HAP-1 (cell line): ENCODE measurements at regions of chr3 and their contacts with region 1.

Region 1: DNA sequence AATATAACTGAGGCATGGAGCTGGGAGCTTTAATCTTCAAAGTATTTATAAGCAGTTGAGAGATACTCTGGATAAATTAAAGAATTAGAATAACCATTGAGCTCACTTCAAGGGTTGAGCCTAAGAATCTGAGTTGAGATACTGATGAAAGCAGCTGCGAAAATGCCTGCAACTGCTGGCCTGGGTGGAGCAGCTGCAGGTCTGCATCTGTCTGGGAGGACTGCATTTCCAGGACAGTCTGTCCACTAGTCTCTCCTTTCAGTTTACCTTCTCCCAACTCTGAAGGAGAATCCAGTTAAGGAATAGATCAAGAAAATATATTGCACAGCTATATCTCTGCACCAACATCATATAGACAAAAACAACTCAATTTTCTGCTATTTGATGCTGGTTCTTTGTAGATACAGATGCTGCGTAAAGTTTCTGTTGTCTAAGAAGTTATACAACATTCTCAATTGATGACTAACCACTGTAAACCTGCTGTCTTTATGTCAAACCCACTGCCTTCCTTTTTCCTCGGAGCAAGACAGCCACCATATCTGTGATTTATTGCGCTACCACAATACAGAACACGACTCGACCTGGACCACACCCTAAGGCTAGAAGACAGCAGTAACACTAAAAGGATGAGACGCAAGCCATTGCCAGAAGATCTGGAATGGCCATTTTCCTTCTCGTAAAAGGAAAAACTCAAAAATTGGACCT is 245.1 kb downstream of the MAGI1 start:
- DNase-seq: no peak
- H3K4me3 ChIP-seq: no peak overlapping the region
- H3K4me1 ChIP-seq: no peaks in the 10 kb centered on the region
- H3K27me3 ChIP-seq: no peaks in the 10 kb centered on the region

Region 2: DNA sequence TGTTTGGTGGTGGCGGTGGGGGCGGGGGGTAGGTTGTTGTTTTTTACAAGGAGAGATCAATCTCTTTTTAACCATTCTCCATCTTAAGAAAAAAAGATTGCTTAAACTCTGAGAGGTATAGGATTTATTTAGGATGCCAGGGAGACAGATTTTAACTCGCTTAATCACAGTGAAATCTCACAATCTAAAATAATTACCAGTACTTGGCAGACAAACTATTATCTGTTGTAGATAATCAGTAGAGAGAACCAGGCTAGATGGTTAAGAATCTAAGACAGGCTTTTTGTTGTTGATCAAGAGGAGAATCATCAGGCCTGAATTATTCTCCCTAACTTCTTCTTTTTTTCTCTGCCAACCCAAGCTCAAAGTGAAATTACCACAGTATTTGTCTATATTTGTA is 635.6 kb before region 1 on chr3:
- in situ Hi-C with region 1: no loop called
- DNase-seq: no peak
- H3K4me3 ChIP-seq: no peak overlapping the region
- H3K4me1 ChIP-seq: peaks cover 12% of the 10 kb centered on the region; the same call in 1 of the 2 replicates
- H3K27me3 ChIP-seq: no peaks in the 10 kb centered on the region

Region 3: DNA sequence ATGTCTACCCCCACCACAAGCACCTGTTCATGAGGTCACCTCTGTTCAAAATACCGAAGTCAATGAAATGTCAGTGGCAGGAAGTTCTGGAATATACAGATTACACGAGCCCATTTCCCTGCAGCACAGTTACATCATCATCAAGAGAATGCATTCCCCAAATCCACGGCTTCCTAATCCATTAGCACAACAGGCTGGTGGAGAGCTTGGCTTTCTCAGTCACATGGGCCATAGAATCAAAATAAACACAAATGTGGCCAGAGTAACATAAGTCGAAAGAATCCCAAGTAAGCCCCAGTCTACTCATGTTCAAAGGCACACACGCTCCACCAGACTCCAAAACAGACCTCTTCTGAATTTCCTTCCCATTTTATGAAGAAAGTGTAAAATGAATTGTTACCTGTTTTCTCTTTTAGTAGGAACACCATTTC is 174.2 kb before region 1 on chr3:
- in situ Hi-C with region 1: no loop called
- DNase-seq: no peak
- H3K4me3 ChIP-seq: no peak overlapping the region
- H3K4me1 ChIP-seq: no peaks in the 10 kb centered on the region
- H3K27me3 ChIP-seq: no peaks in the 10 kb centered on the region

Region 4: GRCh38 chr3:66140743-66141372 is 347.2 kb after region 1 on chr3:
- in situ Hi-C with region 1: loop called (anchors 10 kb)
- DNase-seq: no peak
- H3K4me3 ChIP-seq: no peak overlapping the region
- H3K4me1 ChIP-seq: no peaks in the 10 kb centered on the region
- H3K27me3 ChIP-seq: peaks cover 4% of the 10 kb centered on the region